ENCODE measurements at regions of chr5 and their contacts with region 1.

Region 1: GRCh38 chr5:178153573-178154343 is at the start of gene NHP2:
- DNase-seq: peak; percentile 99

Region 2: GRCh38 chr5:178130604-178131485 is 22.9 kb before region 1 on chr5 and contains the start of gene RMND5B:
- CTCF ChIA-PET with region 1: no interaction called
- POLR2A ChIA-PET with region 1: interaction called, 13 read pairs
- DNase-seq: peak; percentile 94

Region 3: GRCh38 chr5:178177569-178177968 is 23.8 kb after region 1 on chr5:
- CTCF ChIA-PET with region 1: no interaction called
- POLR2A ChIA-PET with region 1: no interaction called
- DNase-seq: no peak